AG04449 (cell line): ENCODE measurements at regions of chr14 and their contacts with region 1.

Region 1: GRCh38 chr14:24299255-24300195 is at the starts of genes DHRS1 and NOP9:
- DNase-seq: peak; percentile 24
- H3K4me3 ChIP-seq: peak within 1 kb of the TSS; percentile 99
- CTCF ChIP-seq: no peak

Region 2: GRCh38 chr14:24058260-24058950 is 241.1 kb before region 1 on chr14:
- CTCF ChIA-PET with region 1: interaction called, 49 read pairs
- POLR2A ChIA-PET with region 1: no interaction called
- DNase-seq: peak; percentile 16
- H3K4me3 ChIP-seq: no peak overlapping the region
- CTCF ChIP-seq: peak; percentile 82

Region 3: DNA sequence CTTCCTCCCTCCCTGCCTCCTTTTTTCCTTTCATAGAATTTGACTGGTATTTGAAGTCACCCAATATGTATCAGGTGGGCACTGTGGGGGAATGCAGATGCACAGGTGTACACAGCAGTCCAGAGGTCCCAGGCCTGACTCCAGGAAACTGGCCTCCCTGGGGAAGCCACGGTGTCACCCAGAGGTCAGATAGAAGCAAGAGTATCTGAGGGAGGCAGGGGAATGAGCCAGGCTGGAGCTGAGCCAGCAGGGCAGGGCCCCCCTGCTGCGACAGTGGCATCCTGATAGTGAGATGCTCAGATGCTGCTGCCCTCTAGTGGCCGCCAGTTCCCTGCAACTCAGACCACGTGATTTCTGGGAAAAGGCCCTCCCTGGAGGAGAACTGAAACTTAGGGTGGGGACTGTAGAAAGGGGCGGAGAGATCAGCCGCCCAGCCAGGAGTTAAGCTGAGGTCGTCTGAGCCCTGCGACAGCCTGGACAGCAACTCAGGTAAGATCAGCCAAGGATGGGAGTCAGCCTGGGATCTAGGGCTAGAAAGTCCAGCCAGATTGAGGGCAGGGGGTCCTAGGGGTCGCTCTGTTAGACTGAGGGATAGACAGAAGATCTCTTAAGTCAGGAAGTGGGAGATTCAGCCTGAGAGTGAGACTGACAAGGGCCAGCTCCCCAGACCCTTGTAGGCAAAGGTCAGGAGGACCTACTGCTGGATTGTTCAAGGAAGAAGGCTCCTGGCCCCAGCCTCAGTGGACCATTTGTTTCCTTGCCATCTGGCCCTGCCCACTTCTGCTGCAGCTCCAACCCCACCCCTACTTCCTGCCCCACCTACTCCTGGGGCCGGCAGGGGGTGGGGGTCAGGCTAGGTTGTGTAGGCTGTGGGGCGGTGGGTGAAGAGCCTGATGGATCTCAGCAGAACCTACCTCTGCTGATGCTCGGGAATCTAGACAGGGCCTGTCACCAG is 138.4 kb before region 1 on chr14 and contains the start of gene IRF9:
- CTCF ChIA-PET with region 1: interaction called, 33 read pairs
- POLR2A ChIA-PET with region 1: no interaction called
- DNase-seq: peak; percentile 72
- H3K4me3 ChIP-seq: peak within 1 kb of the TSS; percentile 93
- CTCF ChIP-seq: peak; percentile 98

Region 4: GRCh38 chr14:24207104-24207551 is 92.4 kb before region 1 on chr14:
- CTCF ChIA-PET with region 1: interaction called, 10 read pairs
- POLR2A ChIA-PET with region 1: interaction called, 4 read pairs
- DNase-seq: no peak
- H3K4me3 ChIP-seq: no peak overlapping the region
- CTCF ChIP-seq: no peak

Region 5: GRCh38 chr14:24241829-24242443 is 57.6 kb before region 1 on chr14:
- CTCF ChIA-PET with region 1: interaction called, 315 read pairs
- POLR2A ChIA-PET with region 1: interaction called, 26 read pairs
- DNase-seq: no peak
- H3K4me3 ChIP-seq: peak overlapping the region; percentile 91
- CTCF ChIP-seq: peak; percentile 65

Region 6: GRCh38 chr14:24279301-24280186 is 20.0 kb before region 1 on chr14:
- CTCF ChIA-PET with region 1: interaction called, 63 read pairs
- POLR2A ChIA-PET with region 1: no interaction called
- DNase-seq: no peak
- H3K4me3 ChIP-seq: no peak overlapping the region
- CTCF ChIP-seq: no peak